Endothelial cell of umbilical vein (primary cell): ENCODE measurements at regions of chr1 and their contacts with region 1.

Region 1: GRCh38 chr1:15152318-15153183 is 996 bp upstream of the TMEM51 start:
- DNase-seq: peak; percentile 89
- H3K4me3 ChIP-seq: peak overlapping the region; percentile 42 to 70 (median 53)
- H3K27ac ChIP-seq: peak overlapping the region; percentile 20
- H3K4me1 ChIP-seq: peaks cover 16% of the 10 kb centered on the region
- H3K27me3 ChIP-seq: peaks cover 9 to 12% of the 10 kb centered on the region in 2 experiments
- CTCF ChIP-seq: peak; percentile 71 to 81
- POLR2A ChIP-seq: no peak

Region 2: GRCh38 chr1:14421977-14422609 is 730.5 kb before region 1 on chr1:
- CTCF ChIA-PET with region 1: no interaction called
- POLR2A ChIA-PET with region 1: no interaction called
- dilution Hi-C with region 1: no loop called
- intact Hi-C with region 1: no loop called
- DNase-seq: no peak
- H3K4me3 ChIP-seq: no peak overlapping the region
- H3K27ac ChIP-seq: no peak overlapping the region
- H3K4me1 ChIP-seq: no peaks in the 10 kb centered on the region
- H3K27me3 ChIP-seq: no peaks in the 10 kb centered on the region
- CTCF ChIP-seq: no peak
- POLR2A ChIP-seq: no peak

Region 3: DNA sequence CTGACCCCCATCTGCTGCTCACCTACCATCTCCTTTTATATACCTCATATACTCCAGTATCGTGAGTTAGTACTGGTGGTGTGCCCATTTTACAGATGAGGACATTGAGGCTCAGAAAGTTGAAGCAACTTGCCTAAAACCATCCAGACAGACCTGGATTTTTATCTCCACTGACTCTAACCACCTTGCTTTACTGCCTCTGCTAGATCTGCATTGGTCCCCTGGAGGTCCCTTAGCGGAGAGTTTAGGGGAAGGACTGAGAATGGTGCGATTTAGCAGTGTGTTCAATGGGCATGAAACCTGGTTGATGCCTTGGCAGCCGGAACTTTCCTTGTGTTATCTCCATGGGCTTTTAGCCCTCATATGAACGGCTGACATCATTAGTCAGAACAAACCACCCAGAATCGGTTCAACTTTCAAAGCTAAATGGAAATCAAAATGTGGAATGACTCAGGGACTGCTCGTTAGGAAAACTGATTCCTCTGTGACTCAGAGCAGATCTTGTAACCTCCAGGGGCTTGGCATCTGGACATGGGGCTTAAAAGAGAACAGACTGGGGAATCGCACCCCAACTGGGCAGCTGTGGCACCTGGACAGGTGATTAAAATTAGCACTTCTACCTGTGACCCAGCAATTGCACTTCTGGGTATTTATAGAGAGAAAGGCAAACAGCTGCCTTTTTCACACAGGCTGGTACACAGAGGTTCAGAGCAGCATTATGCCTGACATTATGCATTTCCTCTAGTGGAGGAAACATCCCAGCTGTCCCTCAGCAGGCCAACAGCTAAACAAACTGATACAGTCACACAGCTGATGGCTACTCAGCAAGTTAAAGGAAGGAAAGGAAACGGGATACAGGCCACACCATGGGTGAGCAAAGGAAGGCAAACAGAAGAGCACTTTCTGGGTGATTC is 26.3 kb after region 1 on chr1:
- CTCF ChIA-PET with region 1: interaction called, 20 read pairs
- POLR2A ChIA-PET with region 1: interaction called, 3 read pairs
- dilution Hi-C with region 1: no loop called
- intact Hi-C with region 1: loop called (anchors 1 kb)
- DNase-seq: peak; percentile 91
- H3K4me3 ChIP-seq: no peak overlapping the region
- H3K27ac ChIP-seq: peak overlapping the region; percentile 90
- H3K4me1 ChIP-seq: peaks cover 32% of the 10 kb centered on the region
- H3K27me3 ChIP-seq: no peaks in the 10 kb centered on the region
- CTCF ChIP-seq: no peak
- POLR2A ChIP-seq: no peak

Region 4: DNA sequence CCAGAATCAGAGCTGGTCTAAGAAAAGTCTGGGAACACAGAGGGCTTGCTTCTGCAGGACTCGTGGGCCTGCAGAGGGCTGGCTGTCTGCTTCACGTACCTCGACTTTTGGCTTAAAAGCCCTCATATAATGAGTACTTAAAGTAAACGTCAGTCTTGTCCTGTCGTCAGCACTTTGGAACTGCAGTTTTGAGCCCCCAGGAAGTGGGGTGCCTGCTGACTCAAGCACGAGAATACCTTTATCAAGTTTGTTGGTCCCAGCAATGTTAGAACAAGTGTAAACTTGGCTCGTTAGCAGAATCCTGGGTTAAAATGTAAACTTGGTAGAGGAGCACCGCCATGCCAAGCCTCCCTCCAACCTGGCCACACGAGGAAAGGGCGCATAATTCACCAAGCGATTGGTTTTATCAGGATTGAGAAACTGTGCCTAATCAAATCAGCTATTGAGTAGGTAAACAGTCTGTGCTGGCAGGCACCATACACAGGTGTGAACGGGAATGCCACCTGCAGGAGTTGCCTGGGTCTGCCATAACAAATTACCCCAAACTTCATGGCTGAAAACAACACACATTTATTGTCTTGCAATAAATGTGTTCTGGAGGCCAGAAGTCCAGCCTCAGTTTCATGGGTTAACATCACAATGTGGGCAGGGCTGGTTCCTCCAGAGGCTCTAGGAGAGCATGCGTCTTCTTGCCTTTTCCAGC is 49.4 kb after region 1 on chr1:
- CTCF ChIA-PET with region 1: interaction called, 14 read pairs
- POLR2A ChIA-PET with region 1: no interaction called
- dilution Hi-C with region 1: no loop called
- intact Hi-C with region 1: loop called (anchors 1 kb)
- DNase-seq: no peak
- H3K4me3 ChIP-seq: no peak overlapping the region
- H3K27ac ChIP-seq: no peak overlapping the region
- H3K4me1 ChIP-seq: peaks cover 14% of the 10 kb centered on the region
- H3K27me3 ChIP-seq: no peaks in the 10 kb centered on the region
- CTCF ChIP-seq: no peak
- POLR2A ChIP-seq: no peak

Region 5: GRCh38 chr1:15246960-15247614 is 94.5 kb after region 1 on chr1 and contains the start of gene FHAD1:
- CTCF ChIA-PET with region 1: interaction called, 13 read pairs
- POLR2A ChIA-PET with region 1: no interaction called
- dilution Hi-C with region 1: no loop called
- intact Hi-C with region 1: loop called (anchors 1 kb)
- DNase-seq: peak; percentile 64
- H3K4me3 ChIP-seq: peak within 1 kb of the TSS in 2 of 3 experiments; percentile 18 to 46
- H3K27ac ChIP-seq: no peak within 1 kb of the TSS
- H3K4me1 ChIP-seq: peaks cover 3% of the 10 kb centered on the region
- H3K27me3 ChIP-seq: peaks cover 23 to 24% of the 10 kb centered on the region in 2 experiments
- CTCF ChIP-seq: no peak
- POLR2A ChIP-seq: no peak
- total RNA-seq, gene FHAD1: 0.51 and 0.69 TPM in 2 replicates

Region 6: DNA sequence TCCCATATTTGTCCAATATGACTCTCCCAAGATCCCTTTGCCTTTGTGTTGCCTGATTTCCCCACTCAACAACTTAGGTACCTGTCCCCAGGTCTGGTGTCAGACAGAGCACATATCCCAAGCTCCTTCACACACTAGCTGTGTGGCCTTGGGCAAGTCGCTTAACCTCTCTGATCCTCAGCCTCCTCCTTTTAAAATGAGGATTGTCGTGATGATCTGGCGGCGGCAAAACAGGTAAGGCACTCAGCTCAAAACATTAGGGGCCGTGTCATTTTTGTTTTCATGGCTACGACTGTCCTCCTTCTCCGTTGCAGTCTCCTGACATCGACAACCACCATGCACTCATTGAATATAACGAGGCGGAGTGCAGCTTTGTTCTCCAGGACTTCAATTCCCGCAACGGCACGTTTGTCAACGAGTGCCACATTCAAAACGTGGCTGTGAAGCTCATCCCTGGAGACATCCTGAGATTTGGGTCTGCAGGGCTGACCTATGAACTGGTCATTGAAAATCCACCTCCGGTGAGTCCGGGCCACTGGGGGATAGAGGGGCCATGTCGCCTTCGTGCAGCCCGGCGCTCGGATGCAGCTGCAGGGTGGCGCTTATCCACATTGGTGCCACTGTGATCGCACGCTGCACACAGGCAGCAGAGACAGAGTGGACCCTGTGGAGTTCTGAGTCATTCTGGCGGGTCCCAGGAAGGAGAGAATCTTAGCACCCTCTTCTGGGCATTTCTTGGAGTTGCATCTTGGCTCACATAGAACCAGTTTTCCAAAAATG is 119.6 kb after region 1 on chr1:
- CTCF ChIA-PET with region 1: interaction called, 211 read pairs
- POLR2A ChIA-PET with region 1: no interaction called
- dilution Hi-C with region 1: no loop called
- intact Hi-C with region 1: loop called (anchors 1 kb)
- DNase-seq: peak; percentile 72
- H3K4me3 ChIP-seq: no peak overlapping the region
- H3K27ac ChIP-seq: no peak overlapping the region
- H3K4me1 ChIP-seq: no peaks in the 10 kb centered on the region
- H3K27me3 ChIP-seq: no peaks in the 10 kb centered on the region
- CTCF ChIP-seq: peak; percentile 76 to 79
- POLR2A ChIP-seq: no peak

Region 7: DNA sequence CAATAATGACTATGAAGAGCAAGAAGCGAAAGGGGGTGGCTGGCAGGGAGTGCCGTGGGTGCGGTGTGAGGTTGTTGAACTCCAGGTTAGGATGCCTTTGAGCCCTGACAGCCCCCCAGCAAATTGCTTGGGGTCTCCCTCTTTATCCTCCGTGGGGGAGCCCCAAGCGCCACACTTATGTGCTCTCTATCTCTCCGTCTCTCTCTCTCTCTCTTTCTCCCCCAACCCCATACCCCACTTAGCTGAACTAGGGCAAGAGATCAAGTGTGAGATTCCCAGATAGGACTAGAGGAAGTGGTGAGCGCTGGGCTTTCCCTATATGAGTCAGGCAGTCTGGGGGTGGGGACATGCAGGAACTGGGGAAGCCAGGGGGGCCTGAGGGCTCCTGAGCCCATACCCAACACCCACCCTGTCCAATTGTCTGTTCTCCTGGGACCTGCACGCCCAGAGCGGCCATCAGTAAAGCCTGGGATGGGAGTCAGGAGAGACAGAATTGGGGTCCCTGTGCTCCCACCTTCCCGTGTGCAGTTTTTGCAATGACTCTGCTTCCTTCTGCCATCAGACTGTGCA is 264.9 kb after region 1 on chr1:
- CTCF ChIA-PET with region 1: no interaction called
- POLR2A ChIA-PET with region 1: no interaction called
- dilution Hi-C with region 1: no loop called
- intact Hi-C with region 1: loop called (anchors 5 kb)
- DNase-seq: peak; percentile 78
- H3K4me3 ChIP-seq: no peak overlapping the region
- H3K27ac ChIP-seq: peak overlapping the region; percentile 48
- H3K4me1 ChIP-seq: peaks cover 56% of the 10 kb centered on the region
- H3K27me3 ChIP-seq: no peaks in the 10 kb centered on the region
- CTCF ChIP-seq: no peak
- POLR2A ChIP-seq: peak; percentile 48

Region 8: DNA sequence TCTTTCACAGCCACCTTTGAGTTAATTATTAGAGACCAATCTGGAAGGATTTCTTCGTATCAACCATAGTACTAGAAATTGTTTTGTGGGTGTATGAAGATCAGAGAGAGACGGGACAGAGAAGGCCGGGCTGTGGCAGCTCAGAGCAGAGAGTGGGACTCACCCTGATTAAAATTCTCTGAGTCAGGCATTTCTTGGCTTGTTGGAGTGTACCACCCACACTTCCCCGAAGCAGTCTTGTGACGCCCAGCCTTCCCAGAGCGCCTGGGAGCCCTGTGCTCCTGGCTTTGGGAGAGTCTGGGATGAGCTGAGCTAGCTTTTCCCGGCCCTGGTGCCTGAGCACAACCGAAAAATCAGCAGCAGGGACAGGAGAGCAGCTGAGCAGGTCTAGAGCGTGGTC is 551.0 kb after region 1 on chr1:
- CTCF ChIA-PET with region 1: no interaction called
- POLR2A ChIA-PET with region 1: no interaction called
- dilution Hi-C with region 1: no loop called
- intact Hi-C with region 1: no loop called
- DNase-seq: peak; percentile 56
- H3K4me3 ChIP-seq: no peak overlapping the region
- H3K27ac ChIP-seq: peak overlapping the region; percentile 13
- H3K4me1 ChIP-seq: no peaks in the 10 kb centered on the region
- H3K27me3 ChIP-seq: no peaks in the 10 kb centered on the region
- CTCF ChIP-seq: no peak
- POLR2A ChIP-seq: no peak